Activated T-helper 2 cell treated with anti-CD3 and anti-CD28 coated beads, Interferon-gamma antibody, Interleukin-2, Interleukin-4, amounts not matched to agents 10 μg/mL and 5 μg/mL and 100 μg/mL, durations not matched to agents 14 hours and 24 hours and 36 hours (primary cell): ENCODE measurements at regions of chr9 and their contacts with region 1.

Region 1: DNA sequence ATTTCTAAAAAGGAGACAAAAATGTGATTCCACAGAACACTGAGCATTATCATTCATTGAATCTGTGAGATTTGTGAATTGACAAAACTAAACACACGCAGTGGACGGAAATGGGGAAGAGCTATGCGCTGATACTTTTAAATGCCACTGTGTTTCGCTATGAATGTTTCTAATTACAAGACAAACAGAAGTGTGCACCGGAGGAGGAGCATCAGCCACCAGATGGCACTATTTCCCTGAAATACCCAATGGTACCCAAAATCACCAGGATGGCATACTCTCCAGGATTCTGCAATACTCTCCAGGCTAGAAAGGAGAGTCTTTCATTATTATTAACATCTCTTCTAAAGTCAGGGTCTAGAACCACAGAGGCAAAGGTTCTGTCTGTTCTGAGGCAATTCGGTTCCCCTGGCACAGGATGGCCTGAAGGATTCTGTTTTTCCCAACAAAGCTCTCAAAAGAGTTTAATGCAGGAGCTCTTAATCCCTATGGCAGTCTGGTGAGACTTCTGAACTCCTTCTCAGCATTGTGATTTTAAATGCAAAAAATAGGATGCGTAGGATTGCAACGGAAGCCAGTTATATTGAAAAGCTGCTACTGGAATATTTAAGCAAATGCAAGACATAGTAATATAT is 13.8 kb upstream of the PUM3 start:
- DNase-seq: peak; percentile 53
- H3K4me3 Mint-ChIP-seq: no peak overlapping the region
- H3K27ac Mint-ChIP-seq: no peak overlapping the region
- H3K4me1 Mint-ChIP-seq: peaks cover 15% of the 10 kb centered on the region
- H3K27me3 Mint-ChIP-seq: peaks cover 19% of the 10 kb centered on the region

Region 2: DNA sequence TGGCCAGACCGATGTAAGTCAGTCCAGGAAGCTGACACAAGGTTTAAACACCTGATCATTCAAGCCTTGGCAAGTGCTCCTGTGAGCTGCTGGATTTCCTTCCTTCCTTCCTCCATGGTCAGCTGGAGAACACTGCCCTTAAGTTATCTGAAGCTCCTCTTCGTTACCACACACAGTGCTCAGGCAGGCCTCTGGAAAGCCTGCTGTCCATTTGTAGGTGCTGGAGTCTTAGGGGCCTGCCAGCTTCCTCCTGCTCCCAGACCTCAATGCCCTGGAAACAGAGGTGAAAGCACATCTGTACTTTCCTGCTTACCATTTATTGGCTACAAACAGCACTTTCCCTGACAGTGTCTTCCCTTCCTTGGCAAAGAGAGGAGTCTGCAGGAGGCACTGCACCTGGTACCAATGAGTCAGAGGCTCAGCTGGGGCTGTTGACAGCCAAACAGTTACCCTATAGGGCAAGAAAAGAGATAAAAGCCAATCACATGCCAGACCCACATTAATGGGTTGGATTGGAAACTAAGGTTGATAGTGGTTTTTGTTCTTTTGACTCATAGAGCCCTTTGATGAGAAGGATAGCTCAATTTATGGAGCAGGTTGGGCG is 58.8 kb after region 1 on chr9:
- intact Hi-C with region 1: no loop called
- DNase-seq: no peak
- H3K4me3 Mint-ChIP-seq: no peak overlapping the region
- H3K27ac Mint-ChIP-seq: no peak overlapping the region
- H3K4me1 Mint-ChIP-seq: no peaks in the 10 kb centered on the region
- H3K27me3 Mint-ChIP-seq: peaks cover 7% of the 10 kb centered on the region

Region 3: GRCh38 chr9:3181049-3181953 is 323.6 kb after region 1 on chr9:
- intact Hi-C with region 1: loop called (anchors 1 kb)
- DNase-seq: peak; percentile 50
- H3K4me3 Mint-ChIP-seq: peak overlapping the region; percentile 67
- H3K27ac Mint-ChIP-seq: no peak overlapping the region
- H3K4me1 Mint-ChIP-seq: peaks cover 4% of the 10 kb centered on the region
- H3K27me3 Mint-ChIP-seq: peaks cover 42% of the 10 kb centered on the region

Region 4: DNA sequence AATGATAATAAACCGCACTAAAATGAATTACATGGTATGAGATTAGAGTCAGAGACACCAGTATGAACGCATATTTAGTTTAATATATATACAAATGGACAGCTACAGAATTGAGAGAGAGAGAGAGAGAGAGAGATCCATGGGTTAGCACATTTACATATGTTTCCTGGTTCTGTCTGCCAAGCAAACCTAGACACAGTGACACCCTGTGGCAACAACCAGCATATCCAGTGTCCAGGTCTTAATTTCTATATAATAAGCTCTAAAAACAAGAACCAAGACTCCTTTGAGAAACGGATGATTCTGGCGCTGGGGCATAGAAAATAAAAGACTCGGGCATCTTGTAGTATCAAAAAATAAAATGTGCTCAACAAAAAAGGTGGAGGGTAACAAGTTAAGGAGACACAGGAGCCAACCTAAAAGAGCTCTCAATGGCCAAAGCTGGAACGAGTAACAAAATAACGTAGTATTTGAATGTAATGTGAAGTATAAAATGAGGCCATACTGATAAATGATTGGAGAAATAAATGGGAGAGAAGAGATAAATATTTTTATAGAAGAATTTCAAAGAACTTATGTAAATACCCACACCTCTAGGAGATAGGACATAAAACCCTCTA is 583.6 kb after region 1 on chr9:
- intact Hi-C with region 1: loop called (anchors 5 kb)
- DNase-seq: peak; percentile 27
- H3K4me3 Mint-ChIP-seq: no peak overlapping the region
- H3K27ac Mint-ChIP-seq: no peak overlapping the region
- H3K4me1 Mint-ChIP-seq: peaks cover 3% of the 10 kb centered on the region
- H3K27me3 Mint-ChIP-seq: no peaks in the 10 kb centered on the region

Region 5: DNA sequence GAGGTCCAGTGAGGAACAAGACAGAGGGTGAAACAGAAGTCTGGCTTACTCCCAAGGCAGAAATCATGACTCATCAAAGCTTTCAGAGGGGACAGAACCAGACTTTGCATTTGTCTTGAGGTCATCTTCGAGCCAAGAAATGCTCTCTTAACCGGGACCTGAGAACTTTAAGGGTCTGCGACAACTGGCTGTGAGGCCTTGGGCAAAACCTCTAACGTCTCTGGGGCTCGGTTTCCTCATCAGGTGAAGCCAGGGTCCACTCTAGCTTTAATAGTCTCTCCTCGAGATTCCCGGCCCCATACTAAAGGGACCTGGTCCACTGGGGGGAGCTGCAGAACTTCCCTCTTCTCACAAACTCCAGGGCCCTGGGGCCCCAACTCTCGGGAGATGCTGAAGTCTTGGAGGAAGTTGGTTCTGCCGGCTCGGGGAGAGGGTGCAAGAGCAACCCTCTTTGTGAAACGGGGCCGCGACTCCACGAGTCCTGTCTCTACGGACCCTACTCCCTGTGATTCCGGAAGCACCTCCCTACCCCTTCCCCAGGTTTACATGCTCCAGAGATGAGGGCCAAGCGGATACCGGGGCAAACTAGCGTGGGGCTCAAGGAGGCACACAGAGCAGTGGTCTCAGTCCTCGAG is 1439.6 kb after region 1 on chr9:
- intact Hi-C with region 1: loop called (anchors 10 kb)
- DNase-seq: peak; percentile 22
- H3K4me3 Mint-ChIP-seq: peak overlapping the region; percentile 97
- H3K27ac Mint-ChIP-seq: peak overlapping the region; percentile 87
- H3K4me1 Mint-ChIP-seq: peaks cover 49% of the 10 kb centered on the region
- H3K27me3 Mint-ChIP-seq: peaks cover 56% of the 10 kb centered on the region

Region 6: GRCh38 chr9:4375424-4376200 is 1517.9 kb after region 1 on chr9:
- intact Hi-C with region 1: loop called (anchors 5 kb)
- DNase-seq: no peak
- H3K4me3 Mint-ChIP-seq: no peak overlapping the region
- H3K27ac Mint-ChIP-seq: no peak overlapping the region
- H3K4me1 Mint-ChIP-seq: no peaks in the 10 kb centered on the region
- H3K27me3 Mint-ChIP-seq: peaks cover 22% of the 10 kb centered on the region